K562 (cell line): ENCODE measurements at regions of chr1 and their contacts with region 1.

Region 1: DNA sequence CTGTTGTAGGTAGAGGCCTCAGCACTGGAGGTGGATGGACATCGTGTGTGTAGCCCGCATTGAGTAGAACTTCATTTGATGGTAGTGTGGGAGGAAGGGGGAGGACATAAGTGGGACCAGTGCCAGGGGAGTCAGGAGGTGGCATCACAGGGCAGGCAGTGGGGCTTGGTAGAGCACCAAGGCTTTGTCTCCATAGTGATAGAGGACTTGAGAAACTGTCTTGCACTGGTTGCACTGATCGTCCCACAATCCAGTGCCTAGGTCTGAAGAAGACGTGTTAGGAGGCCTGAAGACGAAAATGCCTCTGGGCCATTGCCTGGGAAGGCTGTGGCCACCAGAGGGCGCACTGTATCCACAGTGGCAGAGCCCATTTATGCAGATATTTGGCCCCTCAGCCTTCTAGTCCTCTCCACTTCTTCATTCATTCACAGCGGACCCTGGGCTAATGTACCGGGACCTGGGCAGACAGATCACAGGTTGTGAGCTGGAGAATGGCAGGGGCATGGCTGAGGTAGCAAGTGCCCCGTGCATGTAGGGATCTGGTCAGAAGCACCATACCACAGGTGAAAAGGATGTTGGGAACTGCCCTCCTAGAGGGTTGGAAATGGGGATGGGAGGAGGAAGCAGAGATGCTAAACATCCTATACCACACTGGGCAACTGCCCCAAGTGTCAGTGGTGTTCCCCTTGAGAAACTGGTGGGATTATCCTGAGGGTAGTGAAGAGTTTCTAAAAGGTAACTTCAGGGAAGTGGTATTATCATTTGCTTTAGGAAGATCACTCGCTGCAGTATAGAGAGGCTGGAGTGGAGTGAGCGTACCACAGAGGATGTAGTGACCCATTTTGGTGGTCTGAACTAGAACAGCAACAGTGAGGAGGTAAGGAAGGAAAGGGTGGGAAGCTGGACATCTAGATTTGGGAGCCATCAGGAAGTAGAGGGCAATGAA is 95.3 kb downstream of the PIK3R3 start:
- DNase-seq: peak; percentile 87 to 92 (median 88)
- ATAC-seq: peak; percentile 95
- H3K4me3 ChIP-seq: no peak overlapping the region
- H3K27ac ChIP-seq: no peak overlapping the region; the same call in 2 of the 3 replicates
- H3K4me1 ChIP-seq: peaks cover 3 to 12% of the 10 kb centered on the region in 2 experiments; a peak in 4 of 5 replicates
- H3K27me3 ChIP-seq: no peaks in the 10 kb centered on the region
- CTCF ChIP-seq: peak; percentile 97 to 99 (median 99)
- EP300 ChIP-seq: no peak
- POLR2A ChIP-seq: peak; percentile 71
- RAD21 ChIP-seq: peak; percentile 100

Region 2: GRCh38 chr1:46021046-46021996 is 15.8 kb before region 1 on chr1:
- CTCF ChIA-PET with region 1: no interaction called
- POLR2A ChIA-PET with region 1: interaction called, 29 read pairs
- in situ Hi-C with region 1: no loop called
- intact Hi-C with region 1: no loop called
- DNase-seq: no peak
- ATAC-seq: no peak
- H3K4me3 ChIP-seq: no peak overlapping the region
- H3K27ac ChIP-seq: no peak overlapping the region
- H3K4me1 ChIP-seq: no peaks in the 10 kb centered on the region; a peak in 2 of 5 replicates
- H3K27me3 ChIP-seq: no peaks in the 10 kb centered on the region
- CTCF ChIP-seq: no peak
- EP300 ChIP-seq: no peak
- POLR2A ChIP-seq: no peak
- RAD21 ChIP-seq: no peak

Region 3: GRCh38 chr1:46062651-46063319 is 25.6 kb after region 1 on chr1:
- CTCF ChIA-PET with region 1: no interaction called
- POLR2A ChIA-PET with region 1: no interaction called
- in situ Hi-C with region 1: no loop called
- intact Hi-C with region 1: no loop called
- DNase-seq: no peak
- ATAC-seq: peak; percentile 63
- H3K4me3 ChIP-seq: no peak overlapping the region
- H3K27ac ChIP-seq: no peak overlapping the region
- H3K4me1 ChIP-seq: peaks cover 0 to 9% of the 10 kb centered on the region in 2 experiments; a peak in 3 of 5 replicates
- H3K27me3 ChIP-seq: no peaks in the 10 kb centered on the region
- CTCF ChIP-seq: no peak
- EP300 ChIP-seq: no peak
- POLR2A ChIP-seq: no peak
- RAD21 ChIP-seq: no peak

Region 4: GRCh38 chr1:46173361-46173856 is 136.2 kb after region 1 on chr1:
- CTCF ChIA-PET with region 1: interaction called, 157 read pairs
- POLR2A ChIA-PET with region 1: interaction called, 4 read pairs
- in situ Hi-C with region 1: loop called (anchors 5 kb)
- intact Hi-C with region 1: no loop called
- DNase-seq: peak; percentile 55 to 62 (median 60)
- ATAC-seq: peak; percentile 56
- H3K4me3 ChIP-seq: no peak overlapping the region
- H3K27ac ChIP-seq: no peak overlapping the region
- H3K4me1 ChIP-seq: peaks cover 26 to 35% of the 10 kb centered on the region in 2 experiments
- H3K27me3 ChIP-seq: 0 out of 5 replicates have a peak, but pooled peaks cover 0 to 6% of the 10 kb centered on the region in 2 experiments
- CTCF ChIP-seq: peak in 2 of 3 experiments; percentile 25 to 37; a peak in 2 of 6 replicates
- EP300 ChIP-seq: no peak
- POLR2A ChIP-seq: no peak
- RAD21 ChIP-seq: peak; percentile 52 to 76

Region 5: DNA sequence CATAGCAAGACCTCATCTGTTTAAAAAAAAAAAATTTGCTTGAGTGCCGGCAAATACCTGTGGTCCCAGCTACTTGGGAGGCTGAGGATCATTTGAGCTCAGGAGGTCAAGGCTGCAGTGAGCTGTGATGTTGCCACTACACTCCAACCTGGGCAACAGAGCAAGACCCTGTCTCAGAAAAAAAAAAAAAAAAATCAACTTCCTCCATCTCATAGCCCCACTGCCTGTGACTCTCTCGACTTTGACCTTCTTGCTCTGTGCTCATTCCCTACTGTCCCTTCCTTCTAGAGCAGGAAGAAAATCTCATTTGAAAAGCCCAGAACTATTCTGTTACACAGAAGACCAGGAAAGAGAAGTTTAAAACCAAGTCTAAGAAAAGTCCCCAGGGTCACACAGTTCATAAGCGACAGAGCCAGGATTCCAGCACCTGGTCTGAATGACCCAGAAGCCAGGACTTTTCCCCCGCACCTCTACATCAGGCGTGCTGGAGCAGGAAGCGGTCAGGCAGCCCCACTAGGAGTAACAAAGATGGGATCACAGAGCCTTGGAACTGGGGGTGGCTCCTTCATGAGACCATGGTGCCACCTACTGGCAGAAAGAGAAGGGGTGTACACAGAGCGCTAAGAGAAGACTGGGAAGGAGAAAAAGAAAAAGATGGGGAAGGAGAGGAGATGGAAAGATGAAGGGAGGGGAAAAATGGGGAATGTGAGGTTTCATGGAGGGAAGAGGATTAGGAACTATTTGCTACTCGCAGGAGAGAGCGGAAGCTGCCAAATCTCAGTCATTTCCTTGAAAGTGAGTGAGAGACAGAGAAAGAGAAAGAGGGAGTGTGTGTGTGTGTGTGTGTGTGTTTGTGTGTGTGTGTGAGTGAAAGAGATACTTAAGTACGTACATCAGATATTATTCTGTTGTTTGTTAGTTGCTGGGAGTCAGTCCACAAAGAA is 142.2 kb after region 1 on chr1:
- CTCF ChIA-PET with region 1: interaction called, 157 read pairs
- POLR2A ChIA-PET with region 1: interaction called, 7 read pairs
- in situ Hi-C with region 1: loop called (anchors 5 kb)
- intact Hi-C with region 1: loop called (anchors 1 kb)
- DNase-seq: peak; percentile 91 to 92 (median 92)
- ATAC-seq: peak; percentile 95
- H3K4me3 ChIP-seq: no peak overlapping the region
- H3K27ac ChIP-seq: no peak overlapping the region
- H3K4me1 ChIP-seq: peaks cover 22 to 23% of the 10 kb centered on the region in 2 experiments
- H3K27me3 ChIP-seq: no peaks in the 10 kb centered on the region
- CTCF ChIP-seq: peak; percentile 95 to 98 (median 96)
- EP300 ChIP-seq: no peak
- POLR2A ChIP-seq: no peak
- RAD21 ChIP-seq: peak; percentile 100